ENCODE measurements at regions of chr20 and their contacts with region 1.

Region 1: GRCh38 chr20:354298-355064 is 7.6 kb downstream of the NRSN2 start:
- DNase-seq: peak; percentile 42 to 90 (median 78)

Region 2: GRCh38 chr20:407133-407952 is 52.9 kb after region 1 on chr20:
- intact Hi-C with region 1: loop called (anchors 5 kb)
- DNase-seq: peak; percentile 41 to 91 (median 79)

Region 3: GRCh38 chr20:462199-462991 is 107.9 kb after region 1 on chr20 and contains the start of gene TBC1D20:
- intact Hi-C with region 1: loop called (anchors 5 kb)
- DNase-seq: peak; percentile 62 to 94 (median 87)

Region 4: GRCh38 chr20:478949-479429 is 124.5 kb after region 1 on chr20:
- intact Hi-C with region 1: loop called (anchors 5 kb)
- DNase-seq: peak in 10 of 42 donors; percentile 14 to 66 (median 38)

Region 5: GRCh38 chr20:645318-646106 is 291.0 kb after region 1 on chr20:
- intact Hi-C with region 1: loop called (anchors 10 kb)
- DNase-seq: peak in 41 of 42 donors; percentile 28 to 85 (median 67)

Measured in head of caudate nucleus (tissue), 42 donors.